PC-3 (cell line): ENCODE measurements at regions of chr15 and their contacts with region 1.

Region 1: DNA sequence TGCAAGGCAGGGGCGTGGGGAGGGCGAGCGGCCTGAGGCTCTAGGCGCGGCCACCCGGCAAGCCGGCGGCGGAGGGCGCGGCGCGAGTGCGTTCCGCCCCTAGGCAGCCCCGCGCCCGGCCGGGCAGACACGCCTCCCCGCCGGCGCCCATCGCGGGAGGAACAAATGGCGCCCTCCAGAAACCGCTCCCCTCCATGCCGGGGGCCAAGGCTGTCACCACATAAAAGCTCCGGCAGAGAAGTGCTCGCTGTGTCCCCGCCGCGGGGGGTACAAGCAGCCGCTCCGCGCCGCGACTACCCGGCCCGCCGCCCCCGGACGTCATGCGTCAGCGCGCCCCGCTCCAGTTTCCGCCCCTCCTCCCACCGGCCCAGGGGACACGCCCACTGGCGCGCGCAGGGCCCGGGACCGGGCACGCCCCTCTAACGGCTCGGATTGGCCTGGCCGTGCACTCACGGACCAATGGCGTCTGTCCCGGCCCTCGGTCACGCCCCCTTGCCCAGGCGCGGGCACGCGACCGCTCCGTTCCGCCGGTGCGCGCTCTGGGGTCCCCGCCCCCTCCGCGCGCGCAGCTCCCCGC is 391 bp upstream of the KLF13 start:
- DNase-seq: peak; percentile 97
- ATAC-seq: peak; percentile 78
- H3K4me3 ChIP-seq: peak overlapping the region; percentile 89
- H3K27ac ChIP-seq: peak overlapping the region; percentile 72
- H3K4me1 ChIP-seq: peaks cover 10% of the 10 kb centered on the region; the same call in 1 of the 2 replicates
- H3K27me3 ChIP-seq: no peaks in the 10 kb centered on the region
- CTCF ChIP-seq: no peak

Region 2: GRCh38 chr15:31215490-31216214 is 110.6 kb before region 1 on chr15:
- CTCF ChIA-PET with region 1: no interaction called
- POLR2A ChIA-PET with region 1: no interaction called
- intact Hi-C with region 1: loop called (anchors 1 kb)
- DNase-seq: peak; percentile 62
- ATAC-seq: peak; percentile 79
- H3K4me3 ChIP-seq: peak overlapping the region; percentile 67
- H3K27ac ChIP-seq: no peak overlapping the region
- H3K4me1 ChIP-seq: peaks cover 11% of the 10 kb centered on the region; the same call in 1 of the 2 replicates
- H3K27me3 ChIP-seq: no peaks in the 10 kb centered on the region
- CTCF ChIP-seq: peak; percentile 75

Region 3: DNA sequence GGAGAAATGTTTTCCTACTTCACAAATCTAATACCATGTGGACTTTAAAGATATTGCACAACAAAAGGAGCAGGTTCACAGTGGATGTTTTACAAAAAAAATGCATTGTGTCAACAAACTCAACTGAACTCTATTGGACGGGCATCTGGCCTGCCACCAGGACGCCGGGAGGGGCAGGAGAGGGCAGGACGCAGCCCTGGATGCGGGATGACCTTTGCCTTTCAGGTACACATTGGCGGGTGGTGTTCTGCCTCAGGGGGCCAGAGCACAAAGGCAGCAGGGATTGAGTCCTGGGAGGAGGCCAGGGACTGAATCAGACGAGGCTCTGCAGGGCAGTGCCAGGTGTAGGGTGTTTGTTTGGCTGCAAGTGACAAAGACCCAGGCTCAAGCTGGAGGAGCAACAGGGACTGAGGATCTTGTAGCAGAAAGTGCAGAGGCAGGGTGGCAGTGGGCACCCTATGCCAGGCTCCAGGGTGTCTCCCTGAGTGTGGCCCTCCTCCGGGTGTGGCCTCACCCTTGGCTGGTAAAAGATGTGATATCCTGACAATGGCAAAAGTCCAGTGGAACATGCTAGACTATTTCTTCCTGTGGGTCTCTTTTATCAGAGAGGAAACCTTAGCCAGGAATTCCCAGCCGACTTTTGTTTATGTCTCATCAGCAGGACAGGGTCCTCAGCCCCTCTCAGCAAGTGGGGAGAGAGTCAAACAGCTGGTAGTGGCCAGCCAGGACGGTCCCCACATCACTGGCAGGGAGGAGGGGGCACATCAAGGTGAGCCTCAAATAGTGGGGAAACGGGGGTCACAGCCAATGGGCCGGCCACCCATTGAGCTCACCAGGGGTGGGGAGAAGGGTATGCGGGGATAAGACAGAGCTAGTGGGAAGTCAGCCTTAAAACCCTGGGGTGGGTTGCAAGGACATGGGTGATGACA is 29.3 kb before region 1 on chr15:
- CTCF ChIA-PET with region 1: no interaction called
- POLR2A ChIA-PET with region 1: no interaction called
- intact Hi-C with region 1: loop called (anchors 2 kb)
- DNase-seq: peak; percentile 90
- ATAC-seq: peak; percentile 87
- H3K4me3 ChIP-seq: no peak overlapping the region
- H3K27ac ChIP-seq: no peak overlapping the region
- H3K4me1 ChIP-seq: peaks cover 21% of the 10 kb centered on the region
- H3K27me3 ChIP-seq: peaks cover 18% of the 10 kb centered on the region; the same call in 1 of the 2 replicates
- CTCF ChIP-seq: no peak

Region 4: GRCh38 chr15:31308185-31308639 is 18.0 kb before region 1 on chr15:
- CTCF ChIA-PET with region 1: no interaction called
- POLR2A ChIA-PET with region 1: no interaction called
- intact Hi-C with region 1: no loop called
- DNase-seq: no peak
- ATAC-seq: no peak
- H3K4me3 ChIP-seq: no peak overlapping the region
- H3K27ac ChIP-seq: no peak overlapping the region
- H3K4me1 ChIP-seq: no peaks in the 10 kb centered on the region
- H3K27me3 ChIP-seq: peaks cover 18% of the 10 kb centered on the region
- CTCF ChIP-seq: no peak

Region 5: DNA sequence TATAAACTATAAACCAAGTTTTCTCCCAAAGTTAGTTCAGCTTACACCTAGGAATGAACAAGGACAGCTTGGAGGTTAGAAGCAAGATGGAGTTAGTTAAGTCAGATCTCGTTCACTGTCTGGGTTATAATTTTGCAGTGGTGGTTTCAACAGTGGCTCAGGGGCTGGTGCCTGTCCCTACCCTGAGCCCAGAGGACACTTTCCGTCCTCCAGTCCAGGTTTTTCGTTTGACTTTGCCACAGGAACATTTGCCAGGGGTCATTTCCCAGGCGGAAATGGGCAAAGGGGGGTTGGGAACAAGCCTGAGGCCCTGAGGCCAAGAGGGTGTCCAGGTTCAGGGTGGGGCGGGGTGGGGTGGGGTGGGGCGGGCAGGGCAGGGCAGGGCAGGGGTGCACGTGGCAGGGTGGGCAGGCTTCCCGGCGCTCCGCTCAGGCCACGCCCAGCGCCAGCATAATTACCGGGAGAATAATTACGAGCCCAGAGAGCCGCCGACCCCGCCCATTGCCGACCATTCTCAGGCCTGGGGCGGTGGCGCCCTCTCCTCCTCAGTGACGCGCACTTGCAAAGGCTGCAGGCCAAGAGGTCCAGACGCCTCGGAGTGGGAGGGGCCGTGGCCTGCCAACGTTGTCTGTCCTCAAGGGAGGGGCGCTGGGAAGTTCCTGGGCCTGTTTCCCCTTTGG is 70.8 kb after region 1 on chr15:
- CTCF ChIA-PET with region 1: no interaction called
- POLR2A ChIA-PET with region 1: no interaction called
- intact Hi-C with region 1: loop called (anchors 2 kb)
- DNase-seq: peak; percentile 70
- ATAC-seq: peak; percentile 82
- H3K4me3 ChIP-seq: peak overlapping the region; percentile 51; the same call in 1 of the 2 replicates
- H3K27ac ChIP-seq: peak overlapping the region; percentile 36; the same call in 1 of the 2 replicates
- H3K4me1 ChIP-seq: peaks cover 21% of the 10 kb centered on the region; the same call in 1 of the 2 replicates
- H3K27me3 ChIP-seq: 0 out of 2 replicates have a peak, but pooled peaks cover 2% of the 10 kb centered on the region
- CTCF ChIP-seq: no peak

Region 6: GRCh38 chr15:31488426-31489204 is 162.4 kb after region 1 on chr15:
- CTCF ChIA-PET with region 1: interaction called, 5 read pairs
- POLR2A ChIA-PET with region 1: no interaction called
- intact Hi-C with region 1: loop called (anchors 1 kb)
- DNase-seq: peak; percentile 83
- ATAC-seq: peak; percentile 91
- H3K4me3 ChIP-seq: no peak overlapping the region
- H3K27ac ChIP-seq: peak overlapping the region; percentile 67
- H3K4me1 ChIP-seq: peaks cover 24% of the 10 kb centered on the region
- H3K27me3 ChIP-seq: no peaks in the 10 kb centered on the region
- CTCF ChIP-seq: peak; percentile 93